ENCODE measurements at regions of chr15 and their contacts with region 1.

Region 1: GRCh38 chr15:96330450-96331145 is at the start of gene NR2F2:
- DNase-seq: peak; percentile 77
- CTCF ChIP-seq: no peak

Region 2: GRCh38 chr15:95259513-95259912 is 1071.1 kb before region 1 on chr15:
- in situ Hi-C with region 1: loop called (anchors 25 kb)
- DNase-seq: peak; percentile 12
- CTCF ChIP-seq: peak; percentile 30

Region 3: GRCh38 chr15:96225320-96226259 is 105.0 kb before region 1 on chr15:
- in situ Hi-C with region 1: no loop called
- DNase-seq: no peak
- CTCF ChIP-seq: no peak